ENCODE measurements at regions of chr3 and their contacts with region 1.

Region 1: GRCh38 chr3:134212906-134213665 is 37.6 kb downstream of the RYK start:
- DNase-seq: peak; percentile 73
- ATAC-seq: peak; percentile 82
- H3K4me3 Mint-ChIP-seq: no peak overlapping the region
- H3K27ac Mint-ChIP-seq: no peak overlapping the region
- H3K4me1 Mint-ChIP-seq: peaks cover 18% of the 10 kb centered on the region
- H3K27me3 Mint-ChIP-seq: no peaks in the 10 kb centered on the region
- CTCF ChIP-seq: peak; percentile 47

Region 2: GRCh38 chr3:134228035-134228434 is 14.9 kb after region 1 on chr3:
- CTCF ChIA-PET with region 1: interaction called, 43 read pairs
- POLR2A ChIA-PET with region 1: no interaction called
- intact Hi-C with region 1: loop called (anchors 1 kb)
- DNase-seq: no peak
- ATAC-seq: no peak
- H3K4me3 Mint-ChIP-seq: no peak overlapping the region
- H3K27ac Mint-ChIP-seq: no peak overlapping the region
- H3K4me1 Mint-ChIP-seq: peaks cover 55% of the 10 kb centered on the region
- H3K27me3 Mint-ChIP-seq: no peaks in the 10 kb centered on the region
- CTCF ChIP-seq: no peak

Region 3: GRCh38 chr3:134250717-134251220 is 37.7 kb after region 1 on chr3 and contains the start of gene RYK:
- CTCF ChIA-PET with region 1: interaction called, 8 read pairs
- POLR2A ChIA-PET with region 1: no interaction called
- intact Hi-C with region 1: loop called (anchors 1 kb)
- DNase-seq: peak; percentile 86
- ATAC-seq: peak; percentile 74
- H3K4me3 Mint-ChIP-seq: peak within 1 kb of the TSS; percentile 94
- H3K27ac Mint-ChIP-seq: peak within 1 kb of the TSS; percentile 92
- H3K4me1 Mint-ChIP-seq: peaks cover 57% of the 10 kb centered on the region
- H3K27me3 Mint-ChIP-seq: no peaks in the 10 kb centered on the region
- CTCF ChIP-seq: no peak
- total RNA-seq, gene RYK: 34.0 and 38.8 TPM in 2 replicates

Region 4: GRCh38 chr3:134308350-134308891 is 95.3 kb after region 1 on chr3:
- CTCF ChIA-PET with region 1: interaction called, 16 read pairs
- POLR2A ChIA-PET with region 1: no interaction called
- intact Hi-C with region 1: loop called (anchors 1 kb)
- DNase-seq: peak; percentile 46
- ATAC-seq: peak; percentile 84
- H3K4me3 Mint-ChIP-seq: no peak overlapping the region
- H3K27ac Mint-ChIP-seq: no peak overlapping the region
- H3K4me1 Mint-ChIP-seq: peaks cover 4% of the 10 kb centered on the region
- H3K27me3 Mint-ChIP-seq: peaks cover 29% of the 10 kb centered on the region
- CTCF ChIP-seq: no peak

Region 5: DNA sequence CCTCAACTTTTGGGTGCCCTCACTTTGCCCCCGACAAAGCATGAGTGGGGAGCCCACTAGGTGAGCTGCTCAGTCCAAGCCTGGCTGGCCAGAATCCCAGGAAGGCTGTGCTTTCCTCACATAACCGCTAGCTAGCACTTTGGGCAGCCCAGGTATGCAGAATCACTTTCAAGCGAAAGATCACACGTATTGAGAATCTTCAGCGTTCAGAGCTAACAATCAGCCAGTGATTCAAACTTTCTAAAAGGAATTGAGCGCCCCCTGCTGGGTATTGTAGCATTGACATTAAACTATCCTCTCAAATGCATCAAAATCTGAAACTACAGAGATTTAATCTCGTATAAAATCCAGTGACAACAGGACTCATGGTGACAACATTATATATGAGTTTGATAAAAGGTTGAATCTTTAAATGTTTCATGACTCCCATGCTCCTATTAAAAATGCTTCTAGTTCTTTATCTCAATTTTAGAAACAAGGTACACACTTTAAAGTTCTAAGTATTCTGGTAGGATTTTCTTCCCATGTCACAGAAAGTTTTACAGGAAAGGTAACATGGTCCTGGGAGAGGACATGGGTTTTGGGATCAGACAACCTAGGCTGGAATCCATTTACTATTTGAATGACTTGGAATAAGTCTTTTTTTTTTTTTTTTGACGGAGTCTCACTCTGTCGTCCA is 260.9 kb after region 1 on chr3:
- CTCF ChIA-PET with region 1: interaction called, 109 read pairs
- POLR2A ChIA-PET with region 1: no interaction called
- intact Hi-C with region 1: loop called (anchors 1 kb)
- DNase-seq: peak; percentile 32
- ATAC-seq: peak; percentile 54
- H3K4me3 Mint-ChIP-seq: no peak overlapping the region
- H3K27ac Mint-ChIP-seq: no peak overlapping the region
- H3K4me1 Mint-ChIP-seq: peaks cover 2% of the 10 kb centered on the region
- H3K27me3 Mint-ChIP-seq: no peaks in the 10 kb centered on the region
- CTCF ChIP-seq: peak; percentile 39

Region 6: DNA sequence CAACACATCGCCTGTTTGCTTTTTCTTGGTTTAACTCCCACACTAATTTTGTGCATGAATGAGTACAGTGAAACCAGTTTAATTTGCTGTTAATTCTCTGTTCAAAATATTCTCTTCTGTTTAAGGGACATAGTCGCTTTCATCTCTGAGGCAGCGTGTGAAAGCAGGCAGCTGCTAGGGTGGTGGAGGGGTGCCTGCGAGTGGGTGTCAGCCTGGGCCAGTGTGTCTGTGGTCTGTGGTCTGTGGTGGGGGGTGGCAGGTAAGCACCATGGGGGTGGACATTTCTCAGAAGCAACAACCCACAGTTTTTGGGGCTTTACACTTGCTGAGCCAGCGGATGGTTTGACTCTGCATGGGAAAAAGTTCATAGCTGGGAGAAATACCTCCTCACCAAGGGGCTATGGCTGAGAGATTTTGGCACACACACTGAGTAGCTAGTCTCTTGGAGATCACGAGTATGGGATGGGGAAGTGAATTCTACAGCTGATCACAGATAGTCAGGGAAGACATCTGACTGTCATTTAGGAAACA is 691.2 kb after region 1 on chr3:
- CTCF ChIA-PET with region 1: no interaction called
- POLR2A ChIA-PET with region 1: no interaction called
- intact Hi-C with region 1: no loop called
- DNase-seq: no peak
- ATAC-seq: no peak
- H3K4me3 Mint-ChIP-seq: no peak overlapping the region
- H3K27ac Mint-ChIP-seq: no peak overlapping the region
- H3K4me1 Mint-ChIP-seq: no peaks in the 10 kb centered on the region
- H3K27me3 Mint-ChIP-seq: no peaks in the 10 kb centered on the region
- CTCF ChIP-seq: no peak

Measured in activated B cell treated with CpG ODN at 0.5 μM for 24 hours (primary cell).